Activated T-helper 1 cell treated with anti-CD3 and anti-CD28 coated beads, Interleukin-12 subunit alpha, Interleukin-12 subunit beta, Interleukin-2, Interleukin-4 antibody, amounts not matched to agents 30 ng/mL and 10 ng/mL and 1 ng/mL, durations not matched to agents 14 hours and 24 hours and 36 hours (primary cell): ENCODE measurements at regions of chr10 and their contacts with region 1.

Region 1: DNA sequence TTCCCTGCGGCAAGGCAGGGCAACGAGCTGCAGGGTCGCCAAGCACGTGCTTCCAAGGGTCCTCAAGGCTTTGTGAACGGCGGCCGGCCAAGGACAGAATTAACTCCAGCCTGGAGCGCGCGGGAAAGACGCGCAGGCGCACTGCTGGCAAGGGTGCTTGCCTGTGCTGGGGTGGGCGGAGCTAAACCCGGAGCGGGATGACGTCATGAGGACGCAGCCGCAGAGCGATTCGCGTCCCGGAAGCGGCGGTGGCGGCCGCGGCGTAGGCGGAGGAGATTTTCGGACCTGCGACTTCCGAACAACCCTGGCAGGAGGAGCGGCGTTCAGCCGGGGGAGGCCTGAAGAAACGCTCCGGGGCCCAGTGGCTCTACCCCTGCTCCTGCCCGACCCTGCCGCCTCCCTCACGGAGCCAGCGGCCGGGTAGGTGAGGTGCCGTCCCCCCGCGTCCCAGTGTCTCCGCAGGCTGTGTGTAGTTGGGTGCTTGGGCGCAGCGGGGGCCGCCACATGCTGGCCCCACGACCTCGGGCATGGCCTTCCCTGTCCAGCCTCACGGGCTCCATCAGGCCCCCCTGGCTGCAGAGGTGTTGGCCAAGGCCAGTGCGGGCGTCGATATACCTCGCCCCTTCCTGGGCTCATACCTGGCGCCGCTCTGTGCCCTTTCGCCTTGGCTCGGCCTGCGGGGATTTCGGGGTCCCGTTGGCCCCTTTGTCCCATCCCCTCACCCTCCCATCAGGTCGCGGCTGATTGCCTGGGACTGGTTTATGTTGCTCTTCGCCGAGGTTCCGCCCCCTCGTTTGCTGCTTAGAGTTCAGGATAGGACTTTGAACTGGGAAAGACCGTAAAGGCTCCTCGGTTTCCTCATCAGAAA is at the start of gene ZFYVE27:
- DNase-seq: peak; percentile 95
- H3K4me3 Mint-ChIP-seq: peak within 1 kb of the TSS; percentile 93
- H3K27ac Mint-ChIP-seq: peak within 1 kb of the TSS; percentile 100
- H3K4me1 Mint-ChIP-seq: peaks cover 44% of the 10 kb centered on the region
- H3K27me3 Mint-ChIP-seq: peaks cover 2% of the 10 kb centered on the region
- total RNA-seq, gene ZFYVE27: 41.7 and 42.5 TPM in 2 replicates

Region 2: GRCh38 chr10:95896071-95896846 is 1840.9 kb before region 1 on chr10:
- intact Hi-C with region 1: no loop called
- DNase-seq: no peak
- H3K4me3 Mint-ChIP-seq: no peak overlapping the region
- H3K27ac Mint-ChIP-seq: no peak overlapping the region
- H3K4me1 Mint-ChIP-seq: no peaks in the 10 kb centered on the region
- H3K27me3 Mint-ChIP-seq: no peaks in the 10 kb centered on the region

Region 3: GRCh38 chr10:97222326-97222961 is 514.7 kb before region 1 on chr10:
- intact Hi-C with region 1: loop called (anchors 2 kb)
- DNase-seq: no peak
- H3K4me3 Mint-ChIP-seq: no peak overlapping the region
- H3K27ac Mint-ChIP-seq: no peak overlapping the region
- H3K4me1 Mint-ChIP-seq: peaks cover 36% of the 10 kb centered on the region
- H3K27me3 Mint-ChIP-seq: no peaks in the 10 kb centered on the region

Region 4: DNA sequence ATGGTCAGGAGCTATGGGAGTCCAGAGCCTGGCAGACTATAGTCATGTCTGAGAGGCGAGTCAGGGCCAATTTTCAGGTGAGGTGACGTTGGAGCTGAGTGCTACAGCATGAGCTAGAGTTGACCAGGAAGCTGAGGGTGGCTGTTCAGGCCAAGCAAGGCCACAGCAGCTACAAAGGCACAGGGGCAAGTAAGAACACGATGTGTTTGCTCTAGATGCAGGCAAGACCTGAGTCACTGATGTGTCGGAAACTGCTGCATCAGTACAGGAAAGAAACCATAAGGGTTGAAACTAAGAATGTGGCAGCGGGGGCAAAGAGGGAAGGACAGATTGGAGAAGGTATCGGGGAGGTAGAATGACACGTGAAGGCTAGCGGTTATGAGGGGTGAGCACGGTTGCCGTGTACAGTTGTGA is 324.2 kb before region 1 on chr10:
- intact Hi-C with region 1: loop called (anchors 5 kb)
- DNase-seq: peak; percentile 52
- H3K4me3 Mint-ChIP-seq: peak overlapping the region; percentile 47
- H3K27ac Mint-ChIP-seq: peak overlapping the region; percentile 95
- H3K4me1 Mint-ChIP-seq: peaks cover 55% of the 10 kb centered on the region
- H3K27me3 Mint-ChIP-seq: no peaks in the 10 kb centered on the region

Region 5: DNA sequence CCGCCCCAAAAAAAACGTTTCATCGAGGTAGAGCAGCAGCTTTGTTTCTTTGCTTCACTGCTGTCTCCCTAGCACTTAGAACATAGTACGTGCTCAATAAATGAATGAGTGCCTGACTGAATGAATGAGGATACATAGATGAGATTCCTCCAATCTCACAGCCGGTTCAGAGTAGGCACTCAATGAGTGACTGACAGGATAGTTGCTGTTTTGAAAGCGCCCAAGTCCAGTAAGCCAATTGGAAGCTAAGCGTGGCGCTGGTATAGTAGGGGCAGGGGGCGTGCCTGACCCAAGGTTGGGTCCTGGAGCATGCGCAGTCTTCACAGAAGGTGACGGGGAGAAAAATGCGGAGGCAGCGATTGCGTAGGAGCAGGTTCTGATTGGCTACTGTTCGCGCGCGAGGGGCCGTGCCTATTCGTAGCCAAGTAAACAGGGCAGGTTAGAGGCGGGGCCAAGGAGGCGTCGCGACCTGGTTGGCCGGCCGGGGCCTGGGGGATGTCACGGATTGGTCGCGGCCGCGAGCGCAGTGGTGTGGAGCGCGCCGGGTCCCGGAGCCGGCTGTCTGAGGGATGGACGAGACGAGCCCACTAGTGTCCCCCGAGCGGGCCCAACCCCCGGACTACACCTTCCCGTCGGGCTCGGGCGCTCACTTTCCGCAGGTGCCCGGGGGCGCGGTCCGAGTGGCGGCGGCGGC is 96.8 kb before region 1 on chr10 and contains the start of gene PI4K2A:
- intact Hi-C with region 1: loop called (anchors 2 kb)
- DNase-seq: peak; percentile 99
- H3K4me3 Mint-ChIP-seq: peak within 1 kb of the TSS; percentile 96
- H3K27ac Mint-ChIP-seq: peak within 1 kb of the TSS; percentile 86
- H3K4me1 Mint-ChIP-seq: peaks cover 23% of the 10 kb centered on the region
- H3K27me3 Mint-ChIP-seq: peaks cover 1% of the 10 kb centered on the region
- total RNA-seq, gene PI4K2A: 19.3 and 19.7 TPM in 2 replicates

Region 6: GRCh38 chr10:97686962-97687784 is 50.0 kb before region 1 on chr10 and contains the start of gene AVPI1:
- intact Hi-C with region 1: loop called (anchors 1 kb)
- DNase-seq: peak; percentile 92
- H3K4me3 Mint-ChIP-seq: peak within 1 kb of the TSS; percentile 78
- H3K27ac Mint-ChIP-seq: peak within 1 kb of the TSS; percentile 68
- H3K4me1 Mint-ChIP-seq: peaks cover 14% of the 10 kb centered on the region
- H3K27me3 Mint-ChIP-seq: peaks cover 14% of the 10 kb centered on the region
- total RNA-seq, gene AVPI1: 0.66 and 0.93 TPM in 2 replicates

Region 7: DNA sequence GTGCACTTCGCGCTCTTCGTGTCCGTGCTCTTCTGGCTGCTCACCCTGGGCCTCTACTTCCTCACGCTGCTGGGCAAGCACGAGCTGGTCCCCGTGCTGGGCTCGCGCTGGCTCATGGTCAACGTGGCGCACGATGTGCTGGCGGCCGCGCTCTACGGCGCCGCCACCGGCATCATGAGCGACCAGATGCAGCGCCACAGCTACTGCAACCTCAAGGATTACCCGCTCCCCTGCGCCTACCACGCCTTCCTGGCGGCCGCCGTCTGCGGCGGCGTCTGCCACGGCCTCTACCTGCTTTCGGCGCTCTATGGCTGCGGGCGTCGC is 23.1 kb before region 1 on chr10:
- intact Hi-C with region 1: loop called (anchors 1 kb)
- DNase-seq: peak; percentile 42
- H3K4me3 Mint-ChIP-seq: peak overlapping the region; percentile 97
- H3K27ac Mint-ChIP-seq: peak overlapping the region; percentile 90
- H3K4me1 Mint-ChIP-seq: peaks cover 15% of the 10 kb centered on the region
- H3K27me3 Mint-ChIP-seq: peaks cover 37% of the 10 kb centered on the region

Region 8: GRCh38 chr10:97849687-97850402 is 112.7 kb after region 1 on chr10 and contains the start of gene GOLGA7B:
- intact Hi-C with region 1: loop called (anchors 2 kb)
- DNase-seq: peak; percentile 59
- H3K4me3 Mint-ChIP-seq: peak within 1 kb of the TSS; percentile 89
- H3K27ac Mint-ChIP-seq: peak within 1 kb of the TSS; percentile 44
- H3K4me1 Mint-ChIP-seq: peaks cover 31% of the 10 kb centered on the region
- H3K27me3 Mint-ChIP-seq: peaks cover 15% of the 10 kb centered on the region
- total RNA-seq, gene GOLGA7B: 0.26 and 0.29 TPM in 2 replicates